ENCODE measurements at regions of chr3 and their contacts with region 1.

Region 1: GRCh38 chr3:171284308-171285075 is 175.7 kb downstream of the TNIK start:
- DNase-seq: peak; percentile 95
- H3K4me3 ChIP-seq: no peak overlapping the region
- H3K27ac ChIP-seq: peak overlapping the region; percentile 96
- H3K4me1 ChIP-seq: peaks cover 45% of the 10 kb centered on the region
- H3K27me3 ChIP-seq: no peaks in the 10 kb centered on the region
- CTCF ChIP-seq: no peak
- POLR2A ChIP-seq: no peak

Region 2: GRCh38 chr3:170999737-171000242 is 284.7 kb before region 1 on chr3:
- CTCF ChIA-PET with region 1: no interaction called
- POLR2A ChIA-PET with region 1: no interaction called
- dilution Hi-C with region 1: no loop called
- intact Hi-C with region 1: loop called (anchors 5 kb)
- DNase-seq: peak; percentile 95
- H3K4me3 ChIP-seq: no peak overlapping the region
- H3K27ac ChIP-seq: peak overlapping the region; percentile 1
- H3K4me1 ChIP-seq: peaks cover 37% of the 10 kb centered on the region
- H3K27me3 ChIP-seq: no peaks in the 10 kb centered on the region
- CTCF ChIP-seq: no peak
- POLR2A ChIP-seq: no peak

Region 3: DNA sequence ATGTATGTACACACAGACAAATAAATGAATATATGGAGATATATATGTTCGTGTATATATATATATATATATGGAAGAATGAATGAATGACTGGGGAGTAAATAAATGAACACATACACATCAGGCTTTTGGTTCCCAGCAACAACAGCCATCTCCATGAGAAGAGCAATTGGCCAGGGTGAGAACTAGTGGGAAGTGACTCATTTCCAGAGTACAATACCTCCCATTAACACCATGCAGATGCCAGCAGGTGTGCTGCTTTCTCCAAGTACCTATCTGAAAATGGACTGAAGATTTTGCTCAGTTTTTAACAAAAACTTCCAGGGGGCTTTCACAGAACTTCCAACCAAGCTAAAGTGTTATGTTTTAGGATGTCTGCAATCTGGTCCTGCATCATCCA is 78.2 kb before region 1 on chr3:
- CTCF ChIA-PET with region 1: interaction called, 3 read pairs
- POLR2A ChIA-PET with region 1: no interaction called
- dilution Hi-C with region 1: no loop called
- intact Hi-C with region 1: loop called (anchors 1 kb)
- DNase-seq: peak; percentile 74
- H3K4me3 ChIP-seq: no peak overlapping the region
- H3K27ac ChIP-seq: peak overlapping the region; percentile 91
- H3K4me1 ChIP-seq: peaks cover 39% of the 10 kb centered on the region
- H3K27me3 ChIP-seq: no peaks in the 10 kb centered on the region
- CTCF ChIP-seq: no peak
- POLR2A ChIP-seq: no peak

Region 4: GRCh38 chr3:171239757-171240503 is 44.6 kb before region 1 on chr3:
- CTCF ChIA-PET with region 1: no interaction called
- POLR2A ChIA-PET with region 1: no interaction called
- dilution Hi-C with region 1: no loop called
- intact Hi-C with region 1: no loop called
- DNase-seq: no peak
- H3K4me3 ChIP-seq: no peak overlapping the region
- H3K27ac ChIP-seq: no peak overlapping the region
- H3K4me1 ChIP-seq: no peaks in the 10 kb centered on the region
- H3K27me3 ChIP-seq: no peaks in the 10 kb centered on the region
- CTCF ChIP-seq: no peak
- POLR2A ChIP-seq: no peak

Region 5: GRCh38 chr3:171358181-171358880 is 73.8 kb after region 1 on chr3:
- CTCF ChIA-PET with region 1: no interaction called
- POLR2A ChIA-PET with region 1: no interaction called
- dilution Hi-C with region 1: no loop called
- intact Hi-C with region 1: loop called (anchors 5 kb)
- DNase-seq: peak; percentile 41
- H3K4me3 ChIP-seq: no peak overlapping the region
- H3K27ac ChIP-seq: peak overlapping the region; percentile 21
- H3K4me1 ChIP-seq: peaks cover 42% of the 10 kb centered on the region
- H3K27me3 ChIP-seq: no peaks in the 10 kb centered on the region
- CTCF ChIP-seq: no peak
- POLR2A ChIP-seq: no peak

Region 6: GRCh38 chr3:171375666-171376595 is 91.4 kb after region 1 on chr3:
- CTCF ChIA-PET with region 1: no interaction called
- POLR2A ChIA-PET with region 1: no interaction called
- dilution Hi-C with region 1: no loop called
- intact Hi-C with region 1: loop called (anchors 1 kb)
- DNase-seq: peak; percentile 51
- H3K4me3 ChIP-seq: no peak overlapping the region
- H3K27ac ChIP-seq: peak overlapping the region; percentile 82
- H3K4me1 ChIP-seq: peaks cover 46% of the 10 kb centered on the region
- H3K27me3 ChIP-seq: no peaks in the 10 kb centered on the region
- CTCF ChIP-seq: no peak
- POLR2A ChIP-seq: no peak